GM12878 (cell line): ENCODE measurements at regions of chr20 and their contacts with region 1.

Region 1: DNA sequence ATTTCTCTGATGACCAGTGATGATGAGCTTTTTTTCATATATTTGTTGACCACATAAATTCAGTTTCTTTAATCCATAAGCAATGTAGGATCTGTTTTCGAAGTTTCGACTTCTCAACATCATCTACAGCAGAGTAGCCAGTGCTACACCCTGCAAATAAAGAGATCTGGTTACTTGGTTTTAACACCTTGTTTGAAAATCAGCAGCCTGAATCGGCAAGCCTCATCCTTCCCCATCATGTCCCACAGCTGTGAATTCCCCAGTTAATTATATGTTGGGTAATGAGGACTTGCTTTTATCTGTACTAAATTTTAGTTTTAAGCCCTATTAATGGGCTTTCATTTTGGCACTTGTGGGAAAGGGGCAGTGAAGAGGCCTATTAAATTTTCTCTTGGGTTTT is 80.6 kb downstream of the BMP2 start:
- DNase-seq: no peak
- ATAC-seq: peak; percentile 62
- H3K4me3 ChIP-seq: no peak overlapping the region
- H3K27ac ChIP-seq: no peak overlapping the region
- H3K4me1 ChIP-seq: no peaks in the 10 kb centered on the region
- H3K27me3 ChIP-seq: no peaks in the 10 kb centered on the region
- CTCF ChIP-seq: no peak
- EP300 ChIP-seq: peak; percentile 28 to 51; a peak in 1 of 4 replicates
- POLR2A ChIP-seq: no peak
- RAD21 ChIP-seq: no peak

Region 2: DNA sequence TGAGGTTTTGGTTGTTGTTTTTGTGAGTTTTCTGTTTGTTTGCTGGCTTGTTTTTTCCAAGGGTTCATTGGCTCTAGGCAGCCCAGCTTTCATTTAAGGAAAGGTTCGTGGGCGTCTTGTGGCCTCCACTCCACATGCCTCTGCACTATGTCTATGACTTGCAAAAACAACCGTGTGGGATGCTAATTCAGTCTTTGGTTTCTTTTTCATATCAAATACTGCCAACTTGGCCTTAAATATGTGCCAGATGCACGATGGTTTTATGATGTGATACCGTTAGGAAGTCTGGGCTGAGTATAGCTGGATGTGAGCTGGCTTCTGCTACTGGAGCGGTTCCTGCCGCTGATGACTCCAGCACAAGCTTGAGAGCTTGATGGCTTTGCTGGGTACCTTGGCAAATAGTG is 15.8 kb after region 1 on chr20:
- CTCF ChIA-PET with region 1: interaction called, 77 read pairs
- POLR2A ChIA-PET with region 1: interaction called, 59 read pairs
- RAD21 ChIA-PET with region 1: interaction called, 75 read pairs
- SMC1A ChIA-PET with region 1: interaction called, 270 read pairs
- in situ Hi-C with region 1: no loop called
- intact Hi-C with region 1: no loop called
- DNase-seq: no peak
- ATAC-seq: peak; percentile 60
- H3K4me3 ChIP-seq: no peak overlapping the region
- H3K27ac ChIP-seq: no peak overlapping the region
- H3K4me1 ChIP-seq: no peaks in the 10 kb centered on the region
- H3K27me3 ChIP-seq: no peaks in the 10 kb centered on the region
- CTCF ChIP-seq: no peak
- EP300 ChIP-seq: no peak
- POLR2A ChIP-seq: no peak
- RAD21 ChIP-seq: no peak

Region 3: GRCh38 chr20:6868861-6869260 is 20.8 kb after region 1 on chr20:
- CTCF ChIA-PET with region 1: interaction called, 77 read pairs
- POLR2A ChIA-PET with region 1: interaction called, 59 read pairs
- RAD21 ChIA-PET with region 1: interaction called, 75 read pairs
- SMC1A ChIA-PET with region 1: interaction called, 270 read pairs
- in situ Hi-C with region 1: no loop called
- intact Hi-C with region 1: no loop called
- DNase-seq: no peak
- ATAC-seq: peak; percentile 68
- H3K4me3 ChIP-seq: no peak overlapping the region
- H3K27ac ChIP-seq: no peak overlapping the region
- H3K4me1 ChIP-seq: no peaks in the 10 kb centered on the region
- H3K27me3 ChIP-seq: no peaks in the 10 kb centered on the region; a peak in 1 of 4 replicates
- CTCF ChIP-seq: no peak
- EP300 ChIP-seq: no peak
- POLR2A ChIP-seq: no peak
- RAD21 ChIP-seq: no peak

Region 4: DNA sequence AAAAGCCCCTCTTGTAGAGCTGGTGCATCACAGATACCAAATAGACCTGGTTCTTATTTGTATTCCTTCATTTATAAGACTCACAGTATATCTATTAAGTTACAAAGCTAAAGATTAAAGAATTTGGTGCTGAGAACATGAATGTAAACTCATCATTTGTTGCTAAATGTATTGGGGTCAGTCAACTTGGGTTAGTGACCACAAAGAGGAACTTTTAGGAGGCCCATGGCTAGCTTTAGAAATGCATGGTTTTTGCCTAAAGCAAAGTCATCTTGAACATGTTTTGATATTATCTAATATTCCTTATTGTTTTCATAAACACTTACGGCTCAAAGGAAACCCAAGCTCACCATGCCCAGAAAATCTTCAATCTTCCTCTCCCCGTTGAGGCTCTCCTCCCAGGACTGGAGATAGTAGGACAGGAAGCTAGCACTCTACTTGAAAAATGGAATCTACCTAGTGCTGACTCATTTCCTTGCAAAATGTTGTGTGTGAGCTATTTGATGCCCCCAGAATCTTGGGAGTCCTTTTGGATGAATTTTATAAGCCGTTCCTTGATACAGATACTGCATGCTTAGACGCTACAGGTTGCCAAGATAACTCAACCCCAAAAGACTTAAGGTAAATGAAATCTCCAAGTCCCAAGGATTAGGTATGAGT is 40.8 kb after region 1 on chr20:
- CTCF ChIA-PET with region 1: interaction called, 4 read pairs
- POLR2A ChIA-PET with region 1: interaction called, 6 read pairs
- RAD21 ChIA-PET with region 1: interaction called, 7 read pairs
- SMC1A ChIA-PET with region 1: interaction called, 27 read pairs
- in situ Hi-C with region 1: no loop called
- intact Hi-C with region 1: no loop called
- DNase-seq: no peak
- ATAC-seq: peak; percentile 17
- H3K4me3 ChIP-seq: no peak overlapping the region
- H3K27ac ChIP-seq: no peak overlapping the region
- H3K4me1 ChIP-seq: no peaks in the 10 kb centered on the region
- H3K27me3 ChIP-seq: no peaks in the 10 kb centered on the region
- CTCF ChIP-seq: no peak
- EP300 ChIP-seq: no peak
- POLR2A ChIP-seq: no peak
- RAD21 ChIP-seq: no peak

Region 5: GRCh38 chr20:6914986-6915385 is 66.9 kb after region 1 on chr20:
- CTCF ChIA-PET with region 1: interaction called, 6 read pairs
- POLR2A ChIA-PET with region 1: interaction called, 100 read pairs
- RAD21 ChIA-PET with region 1: interaction called, 70 read pairs
- SMC1A ChIA-PET with region 1: interaction called, 370 read pairs
- in situ Hi-C with region 1: no loop called
- intact Hi-C with region 1: no loop called
- DNase-seq: no peak
- ATAC-seq: peak; percentile 47
- H3K4me3 ChIP-seq: no peak overlapping the region
- H3K27ac ChIP-seq: no peak overlapping the region
- H3K4me1 ChIP-seq: no peaks in the 10 kb centered on the region
- H3K27me3 ChIP-seq: no peaks in the 10 kb centered on the region
- CTCF ChIP-seq: no peak
- EP300 ChIP-seq: no peak
- POLR2A ChIP-seq: no peak
- RAD21 ChIP-seq: no peak

Region 6: DNA sequence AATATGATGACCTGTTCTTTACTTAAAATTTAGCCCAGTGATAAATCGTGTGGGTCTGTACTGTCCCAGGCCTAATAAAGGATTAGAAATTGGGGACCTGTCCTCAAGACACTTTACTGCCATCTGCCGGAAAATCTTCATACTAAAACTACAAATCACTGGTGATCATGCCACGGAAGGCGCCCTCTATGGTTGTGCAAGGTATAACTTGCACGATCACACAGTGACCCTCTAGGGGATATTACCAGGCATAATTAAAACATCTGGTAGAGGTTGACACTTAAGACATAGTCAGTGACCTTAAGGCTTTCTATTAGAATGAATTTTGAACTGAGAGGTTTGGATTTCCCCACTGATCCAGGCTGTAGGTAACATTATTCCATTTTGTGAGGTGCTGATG is 92.0 kb after region 1 on chr20:
- CTCF ChIA-PET with region 1: interaction called, 5 read pairs
- POLR2A ChIA-PET with region 1: interaction called, 4 read pairs
- RAD21 ChIA-PET with region 1: interaction called, 6 read pairs
- SMC1A ChIA-PET with region 1: interaction called, 16 read pairs
- in situ Hi-C with region 1: no loop called
- intact Hi-C with region 1: no loop called
- DNase-seq: no peak
- ATAC-seq: peak; percentile 80
- H3K4me3 ChIP-seq: no peak overlapping the region
- H3K27ac ChIP-seq: no peak overlapping the region
- H3K4me1 ChIP-seq: no peaks in the 10 kb centered on the region
- H3K27me3 ChIP-seq: no peaks in the 10 kb centered on the region
- CTCF ChIP-seq: peak; percentile 16 to 61 (median 28); a peak in 4 of 6 replicates
- EP300 ChIP-seq: no peak
- POLR2A ChIP-seq: no peak
- RAD21 ChIP-seq: peak; percentile 16; the same call in 1 of the 2 replicates